Endothelial cell of umbilical vein (primary cell): ENCODE measurements at regions of chr3 and their contacts with region 1.

Region 1: GRCh38 chr3:8663177-8664061 is 18.8 kb upstream of the SSUH2 start:
- DNase-seq: peak; percentile 66
- H3K4me3 ChIP-seq: no peak overlapping the region
- H3K27ac ChIP-seq: no peak overlapping the region
- H3K4me1 ChIP-seq: peaks cover 4% of the 10 kb centered on the region
- H3K27me3 ChIP-seq: peaks cover 0 to 8% of the 10 kb centered on the region in 2 experiments
- CTCF ChIP-seq: peak; percentile 52 to 67
- POLR2A ChIP-seq: no peak

Region 2: DNA sequence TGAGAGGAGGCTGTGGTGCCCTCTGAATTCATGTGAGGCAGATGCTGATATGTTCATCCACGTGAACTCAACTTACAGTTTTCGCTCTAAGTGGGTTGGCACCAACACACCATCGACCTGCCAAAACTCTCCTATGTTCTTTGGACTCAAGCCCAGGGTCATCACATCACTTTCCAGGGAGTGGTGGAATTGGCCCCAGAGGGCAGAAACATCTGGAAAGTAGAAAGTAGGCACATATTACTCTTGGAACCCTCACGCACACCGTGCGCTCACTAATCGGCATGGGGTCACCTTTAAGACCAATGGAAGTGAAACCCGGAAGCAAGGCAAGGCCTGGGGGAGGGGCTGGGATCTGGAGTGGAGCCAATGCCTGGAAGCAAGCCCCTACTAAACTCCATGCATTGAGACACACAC is 60.2 kb before region 1 on chr3:
- CTCF ChIA-PET with region 1: no interaction called
- POLR2A ChIA-PET with region 1: no interaction called
- dilution Hi-C with region 1: no loop called
- intact Hi-C with region 1: no loop called
- DNase-seq: peak; percentile 5
- H3K4me3 ChIP-seq: no peak overlapping the region
- H3K27ac ChIP-seq: no peak overlapping the region
- H3K4me1 ChIP-seq: no peaks in the 10 kb centered on the region
- H3K27me3 ChIP-seq: no peaks in the 10 kb centered on the region
- CTCF ChIP-seq: no peak
- POLR2A ChIP-seq: no peak

Region 3: DNA sequence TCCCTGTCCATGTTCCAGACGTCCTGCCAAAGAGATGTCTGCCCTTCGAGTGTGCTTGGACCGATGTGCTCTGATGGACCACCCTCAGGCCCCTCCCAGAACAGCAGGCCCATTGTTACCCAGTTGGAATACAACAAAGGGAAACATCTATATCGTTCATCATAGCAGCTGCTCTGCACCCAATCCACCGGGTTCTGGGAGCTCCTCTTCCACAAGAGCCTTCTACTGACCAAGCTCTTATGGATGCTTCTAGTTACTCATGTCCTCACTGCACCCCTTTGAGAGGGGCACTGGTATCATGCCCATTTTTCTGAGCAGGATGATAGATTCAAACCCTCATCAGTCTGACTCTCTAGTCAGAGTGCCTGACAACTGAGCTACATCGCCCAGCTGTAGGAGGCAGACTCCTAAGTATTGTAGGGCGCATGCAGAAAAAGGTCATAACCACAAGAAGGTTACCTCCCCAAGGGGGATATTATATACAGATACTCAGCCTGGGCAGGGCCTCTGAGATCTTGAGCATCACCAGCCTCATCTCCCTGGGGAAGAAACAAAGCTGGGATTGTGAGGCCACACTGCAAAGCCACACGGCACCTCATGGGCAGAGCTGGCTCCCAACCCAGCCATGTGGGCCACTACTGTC is 18.6 kb before region 1 on chr3 and contains the start of gene SSUH2:
- CTCF ChIA-PET with region 1: interaction called, 16 read pairs
- POLR2A ChIA-PET with region 1: no interaction called
- dilution Hi-C with region 1: no loop called
- intact Hi-C with region 1: no loop called
- DNase-seq: no peak
- H3K4me3 ChIP-seq: no peak within 1 kb of the TSS
- H3K27ac ChIP-seq: no peak within 1 kb of the TSS
- H3K4me1 ChIP-seq: no peaks in the 10 kb centered on the region
- H3K27me3 ChIP-seq: peaks cover 0 to 3% of the 10 kb centered on the region in 2 experiments
- CTCF ChIP-seq: no peak
- POLR2A ChIP-seq: no peak
- total RNA-seq, gene SSUH2: 0.44 TPM in 1 of 2 replicates, not detected in the other

Region 4: DNA sequence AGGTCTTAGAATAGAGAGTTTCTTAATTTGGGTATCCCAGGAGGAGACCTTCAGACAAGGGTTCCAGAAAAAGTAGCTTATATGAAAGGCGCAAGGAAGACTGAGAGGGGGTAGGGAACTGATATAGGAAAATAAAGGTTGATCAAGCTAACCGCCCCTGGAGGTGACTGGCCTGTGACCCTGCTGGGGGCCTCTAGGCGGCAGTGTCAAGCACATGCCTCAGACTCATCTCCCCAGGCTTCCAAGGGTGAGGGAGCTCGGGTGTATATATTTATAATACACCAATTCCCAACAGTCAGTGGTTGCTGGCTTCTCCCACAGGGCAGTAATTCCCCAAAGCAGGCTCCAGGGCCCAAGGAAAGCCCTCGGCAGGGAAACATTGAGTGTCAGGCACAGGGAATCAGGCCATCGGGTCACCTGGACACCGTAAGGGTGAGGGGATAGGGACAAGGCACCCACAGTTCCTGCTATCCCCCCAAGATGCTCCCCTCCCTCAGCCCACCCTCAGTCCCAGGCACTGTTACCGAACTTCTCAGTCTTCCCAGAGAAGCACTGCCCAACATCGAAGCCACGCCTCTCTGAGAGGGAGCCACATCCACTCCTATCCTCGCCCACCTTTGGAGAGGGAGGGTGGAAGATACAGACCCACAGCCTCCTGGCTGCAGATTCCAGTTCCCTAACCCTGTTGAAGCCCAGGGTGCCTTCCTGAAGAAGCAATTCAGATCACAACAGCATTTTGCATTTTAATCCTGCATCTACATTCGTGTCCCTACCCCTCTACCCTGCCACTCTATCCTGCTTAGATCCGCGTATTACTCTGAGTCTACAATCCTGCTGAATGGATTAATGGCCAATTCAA is 50.7 kb after region 1 on chr3:
- CTCF ChIA-PET with region 1: interaction called, 12 read pairs
- POLR2A ChIA-PET with region 1: no interaction called
- dilution Hi-C with region 1: no loop called
- intact Hi-C with region 1: no loop called
- DNase-seq: no peak
- H3K4me3 ChIP-seq: no peak overlapping the region
- H3K27ac ChIP-seq: no peak overlapping the region
- H3K4me1 ChIP-seq: no peaks in the 10 kb centered on the region
- H3K27me3 ChIP-seq: no peaks in the 10 kb centered on the region
- CTCF ChIP-seq: peak; percentile 8 to 62
- POLR2A ChIP-seq: no peak

Region 5: GRCh38 chr3:9067352-9067975 is 404.0 kb after region 1 on chr3:
- CTCF ChIA-PET with region 1: interaction called, 5 read pairs
- POLR2A ChIA-PET with region 1: no interaction called
- dilution Hi-C with region 1: no loop called
- intact Hi-C with region 1: loop called (anchors 1 kb)
- DNase-seq: peak; percentile 61
- H3K4me3 ChIP-seq: no peak overlapping the region
- H3K27ac ChIP-seq: no peak overlapping the region
- H3K4me1 ChIP-seq: no peaks in the 10 kb centered on the region
- H3K27me3 ChIP-seq: no peaks in the 10 kb centered on the region
- CTCF ChIP-seq: peak; percentile 78
- POLR2A ChIP-seq: no peak